ENCODE measurements at regions of chr11 and their contacts with region 1.

Region 1: GRCh38 chr11:69949327-69949726 is 128.8 kb upstream of the ANO1 start:
- DNase-seq: peak; percentile 96 to 99
- H3K4me3 ChIP-seq: peak overlapping the region; percentile 5; the same call in 1 of the 2 replicates
- H3K27ac ChIP-seq: peak overlapping the region; percentile 96
- H3K4me1 ChIP-seq: peaks cover 45% of the 10 kb centered on the region
- H3K27me3 ChIP-seq: no peaks in the 10 kb centered on the region
- CTCF ChIP-seq: no peak

Region 2: GRCh38 chr11:69686452-69686851 is 262.9 kb before region 1 on chr11:
- CTCF ChIA-PET with region 1: no interaction called
- POLR2A ChIA-PET with region 1: interaction called, 20 read pairs
- intact Hi-C with region 1: no loop called
- DNase-seq: peak in 1 of 2 experiments; percentile 9
- H3K4me3 ChIP-seq: no peak overlapping the region
- H3K27ac ChIP-seq: no peak overlapping the region
- H3K4me1 ChIP-seq: peaks cover 63% of the 10 kb centered on the region
- H3K27me3 ChIP-seq: no peaks in the 10 kb centered on the region
- CTCF ChIP-seq: no peak

Region 3: DNA sequence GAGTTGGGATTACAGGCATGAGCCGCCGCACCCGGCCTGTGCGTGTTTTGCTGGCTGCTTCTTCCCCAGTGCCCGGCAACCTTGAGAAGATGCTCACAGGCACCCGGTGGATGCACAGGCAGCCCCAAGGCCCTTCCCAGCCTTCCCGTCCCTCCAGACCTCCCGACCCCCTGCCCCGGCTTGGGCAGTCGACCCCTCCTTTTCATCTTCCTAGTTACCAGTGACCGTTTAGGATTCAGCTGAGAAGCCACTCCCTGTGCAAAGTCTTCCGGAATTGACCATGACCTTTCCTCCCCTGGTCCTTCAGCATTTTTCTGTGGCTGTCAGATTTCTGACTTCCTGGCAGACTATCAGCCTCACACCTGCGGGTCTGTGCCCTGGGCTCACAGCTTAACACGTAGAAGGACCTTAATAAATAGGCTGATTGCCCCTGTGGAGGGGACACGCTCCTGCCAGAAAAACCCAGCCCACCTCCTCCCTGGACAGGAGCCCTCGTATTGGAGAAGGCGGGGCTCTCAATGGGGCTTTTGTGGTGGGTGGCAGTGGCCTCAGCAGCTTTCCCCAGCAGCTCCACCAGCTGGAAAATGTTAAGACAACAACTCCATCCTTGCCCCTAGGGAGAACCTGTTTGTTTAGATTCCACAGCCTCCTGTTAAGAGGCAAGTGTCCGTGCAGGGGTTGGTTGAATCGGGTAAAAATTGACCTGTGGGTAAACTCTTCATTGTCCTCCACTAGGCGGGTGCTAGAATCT is 118.4 kb after region 1 on chr11:
- CTCF ChIA-PET with region 1: no interaction called
- POLR2A ChIA-PET with region 1: no interaction called
- intact Hi-C with region 1: loop called (anchors 10 kb)
- DNase-seq: peak; percentile 81 to 98
- H3K4me3 ChIP-seq: peak overlapping the region; percentile 50
- H3K27ac ChIP-seq: peak overlapping the region; percentile 86
- H3K4me1 ChIP-seq: peaks cover 91% of the 10 kb centered on the region
- H3K27me3 ChIP-seq: no peaks in the 10 kb centered on the region
- CTCF ChIP-seq: peak; percentile 48; the same call in 1 of the 2 replicates

Region 4: GRCh38 chr11:70128435-70128906 is 179.1 kb after region 1 on chr11:
- CTCF ChIA-PET with region 1: interaction called, 6 read pairs
- POLR2A ChIA-PET with region 1: no interaction called
- intact Hi-C with region 1: loop called (anchors 2 kb)
- DNase-seq: peak; percentile 51 to 78
- H3K4me3 ChIP-seq: no peak overlapping the region
- H3K27ac ChIP-seq: peak overlapping the region; percentile 18; the same call in 1 of the 2 replicates
- H3K4me1 ChIP-seq: peaks cover 22% of the 10 kb centered on the region
- H3K27me3 ChIP-seq: no peaks in the 10 kb centered on the region
- CTCF ChIP-seq: 0 out of 2 replicates have a peak, but pooled peaks have one; percentile 26

Region 5: DNA sequence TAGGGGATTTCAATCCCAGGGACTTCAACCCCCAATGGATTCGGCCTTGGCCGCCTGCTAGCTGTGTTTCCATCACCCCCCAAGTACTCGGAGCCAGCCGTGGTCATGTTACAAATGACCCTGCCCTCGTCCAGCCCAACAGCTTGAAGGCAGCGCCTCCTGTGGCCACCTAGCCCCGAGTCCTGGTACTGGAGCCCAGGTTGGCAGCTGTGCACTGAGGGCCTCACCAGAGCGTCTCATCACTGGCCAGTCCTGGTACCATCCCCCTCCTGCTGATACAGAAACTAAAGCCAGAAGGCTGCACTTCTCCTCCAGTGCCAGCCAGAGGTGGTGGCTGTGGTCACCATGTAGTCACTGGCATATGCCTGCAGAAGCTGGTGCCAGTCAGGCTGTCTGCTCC is 208.9 kb after region 1 on chr11:
- CTCF ChIA-PET with region 1: no interaction called
- POLR2A ChIA-PET with region 1: no interaction called
- intact Hi-C with region 1: loop called (anchors 1 kb)
- DNase-seq: no peak
- H3K4me3 ChIP-seq: no peak overlapping the region
- H3K27ac ChIP-seq: 0 out of 2 replicates have a peak overlapping the region, but pooled peaks have one; percentile 3
- H3K4me1 ChIP-seq: peaks cover 19% of the 10 kb centered on the region
- H3K27me3 ChIP-seq: no peaks in the 10 kb centered on the region
- CTCF ChIP-seq: peak; percentile 52; the same call in 1 of the 2 replicates

Region 6: DNA sequence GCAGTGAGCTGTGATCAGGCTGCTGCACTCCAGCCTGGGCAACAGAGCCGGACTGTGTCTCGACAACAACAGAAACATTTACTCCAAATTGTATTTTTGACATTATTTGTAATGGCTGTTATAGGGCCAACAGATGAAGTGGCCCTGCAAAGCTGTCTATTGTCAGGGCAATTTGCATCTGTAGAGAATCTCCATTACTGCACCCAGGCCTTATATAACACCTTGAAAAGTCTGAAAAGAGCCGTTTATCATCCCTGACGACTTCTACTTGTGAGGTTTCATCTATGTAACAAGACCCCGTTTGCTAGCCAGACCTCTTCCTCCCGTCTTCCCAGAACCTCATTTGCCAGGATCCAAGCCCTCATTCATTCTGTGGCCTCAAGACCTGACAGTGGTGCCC is 439.9 kb after region 1 on chr11:
- CTCF ChIA-PET with region 1: no interaction called
- POLR2A ChIA-PET with region 1: interaction called, 10 read pairs
- intact Hi-C with region 1: no loop called
- DNase-seq: no peak
- H3K4me3 ChIP-seq: no peak overlapping the region
- H3K27ac ChIP-seq: no peak overlapping the region
- H3K4me1 ChIP-seq: no peaks in the 10 kb centered on the region
- H3K27me3 ChIP-seq: no peaks in the 10 kb centered on the region
- CTCF ChIP-seq: no peak

Measured in PC-9 (cell line).